ENCODE measurements at regions of chr5 and their contacts with region 1.

Region 1: GRCh38 chr5:134577796-134578363 is 52.4 kb downstream of the JADE2 start:
- DNase-seq: peak; percentile 90
- ATAC-seq: peak; percentile 83
- H3K4me3 Mint-ChIP-seq: no peak overlapping the region
- H3K27ac Mint-ChIP-seq: peak overlapping the region; percentile 25
- H3K4me1 Mint-ChIP-seq: peaks cover 9% of the 10 kb centered on the region
- H3K27me3 Mint-ChIP-seq: no peaks in the 10 kb centered on the region

Region 2: GRCh38 chr5:133709209-133709725 is 868.6 kb before region 1 on chr5:
- CTCF ChIA-PET with region 1: no interaction called
- POLR2A ChIA-PET with region 1: no interaction called
- intact Hi-C with region 1: no loop called
- DNase-seq: no peak
- ATAC-seq: no peak
- H3K4me3 Mint-ChIP-seq: no peak overlapping the region
- H3K27ac Mint-ChIP-seq: no peak overlapping the region
- H3K4me1 Mint-ChIP-seq: no peaks in the 10 kb centered on the region
- H3K27me3 Mint-ChIP-seq: peaks cover 2% of the 10 kb centered on the region

Region 3: DNA sequence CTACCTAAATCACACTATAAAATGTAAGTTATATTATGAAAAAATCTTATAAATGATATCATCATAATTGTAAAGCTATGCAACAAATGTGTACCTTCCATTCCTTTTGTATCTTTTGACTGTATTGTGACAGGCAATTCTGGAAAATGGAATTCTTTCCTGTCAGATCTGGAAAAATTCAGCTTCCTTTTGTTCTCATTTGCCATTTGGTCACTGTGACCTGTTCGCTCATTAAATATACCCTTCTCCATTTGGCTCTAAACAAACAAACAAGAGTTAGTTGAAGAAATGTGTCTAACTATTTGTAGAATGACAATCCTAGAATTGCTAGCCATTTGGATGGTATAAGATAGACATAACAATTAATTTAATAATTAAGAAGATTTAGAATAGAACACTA is 273.6 kb before region 1 on chr5:
- CTCF ChIA-PET with region 1: interaction called, 9 read pairs
- POLR2A ChIA-PET with region 1: no interaction called
- intact Hi-C with region 1: loop called (anchors 2 kb)
- DNase-seq: no peak
- ATAC-seq: no peak
- H3K4me3 Mint-ChIP-seq: no peak overlapping the region
- H3K27ac Mint-ChIP-seq: no peak overlapping the region
- H3K4me1 Mint-ChIP-seq: no peaks in the 10 kb centered on the region
- H3K27me3 Mint-ChIP-seq: no peaks in the 10 kb centered on the region

Region 4: DNA sequence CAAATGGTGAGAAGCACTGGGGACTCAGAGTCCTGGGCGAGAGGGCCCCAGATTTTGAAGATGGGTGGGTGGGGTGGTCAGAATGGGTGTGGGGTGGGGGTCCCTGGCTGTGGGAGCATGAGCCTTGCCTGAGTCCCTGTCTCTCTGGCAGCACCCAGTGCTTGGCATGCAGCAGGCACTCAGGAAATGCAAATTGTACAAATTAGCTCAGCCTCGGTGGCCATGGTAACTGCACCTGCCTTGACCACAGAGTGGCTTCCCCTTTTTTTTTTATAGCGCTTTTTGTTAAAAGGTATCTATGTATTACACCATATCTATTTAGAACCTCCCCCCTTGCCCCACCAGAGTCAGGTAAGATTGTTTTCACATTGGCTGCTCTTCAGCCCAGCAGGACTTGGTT is 475.4 kb after region 1 on chr5:
- CTCF ChIA-PET with region 1: no interaction called
- POLR2A ChIA-PET with region 1: no interaction called
- intact Hi-C with region 1: no loop called
- DNase-seq: no peak
- ATAC-seq: no peak
- H3K4me3 Mint-ChIP-seq: no peak overlapping the region
- H3K27ac Mint-ChIP-seq: no peak overlapping the region
- H3K4me1 Mint-ChIP-seq: no peaks in the 10 kb centered on the region
- H3K27me3 Mint-ChIP-seq: peaks cover 41% of the 10 kb centered on the region

Region 5: DNA sequence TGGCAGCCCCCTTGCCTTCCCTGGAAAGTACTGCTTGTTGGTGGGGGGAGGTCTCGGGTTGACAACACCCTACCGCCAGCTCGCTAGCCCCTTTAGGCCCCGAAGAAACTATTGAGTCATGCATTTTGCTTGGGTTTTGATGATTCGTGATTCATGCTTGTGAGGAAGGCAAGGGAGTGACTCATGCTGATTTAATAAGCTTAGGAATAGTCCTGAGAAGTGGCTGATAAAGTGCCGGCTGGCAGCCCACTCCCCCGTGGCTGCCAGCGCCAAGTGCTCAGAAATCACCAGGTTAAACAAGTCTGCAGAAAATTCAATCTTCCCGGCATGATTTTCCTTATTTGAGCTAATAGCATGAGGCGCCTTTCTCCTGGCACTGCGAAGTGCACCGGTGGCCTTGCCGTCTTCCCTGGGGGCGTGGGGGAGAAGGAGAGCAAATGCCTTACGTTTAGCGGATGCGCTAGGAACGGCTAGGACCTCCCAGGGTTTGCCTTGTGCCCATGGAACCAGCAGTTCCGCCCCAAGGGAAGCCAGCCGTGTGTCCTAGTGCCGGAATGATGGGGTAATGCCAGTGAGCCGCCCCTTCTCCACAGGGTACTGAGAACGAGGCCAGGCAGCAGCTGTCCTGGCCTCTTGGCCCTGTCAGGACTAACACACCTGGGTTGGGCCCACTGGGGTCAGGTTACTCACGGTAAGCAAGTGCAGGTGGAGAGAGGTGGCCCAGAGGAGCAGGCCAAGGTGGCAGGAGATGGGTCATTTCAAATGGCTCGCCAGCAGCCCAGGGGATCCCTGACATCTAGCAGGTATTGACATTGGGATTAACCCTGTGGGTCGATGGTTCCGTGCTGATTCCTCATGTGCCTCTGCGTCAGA is 669.3 kb after region 1 on chr5:
- CTCF ChIA-PET with region 1: no interaction called
- POLR2A ChIA-PET with region 1: no interaction called
- intact Hi-C with region 1: no loop called
- DNase-seq: peak; percentile 37
- ATAC-seq: peak; percentile 77
- H3K4me3 Mint-ChIP-seq: no peak overlapping the region
- H3K27ac Mint-ChIP-seq: no peak overlapping the region
- H3K4me1 Mint-ChIP-seq: peaks cover 4% of the 10 kb centered on the region
- H3K27me3 Mint-ChIP-seq: no peaks in the 10 kb centered on the region